Activated CD8-positive, alpha-beta memory T cell treated with anti-CD3 and anti-CD28 coated beads, Interleukin-2, amount 10 ng/mL, durations not matched to agents 7 days and 5 days (primary cell): ENCODE measurements at regions of chr9 and their contacts with region 1.

Region 1: DNA sequence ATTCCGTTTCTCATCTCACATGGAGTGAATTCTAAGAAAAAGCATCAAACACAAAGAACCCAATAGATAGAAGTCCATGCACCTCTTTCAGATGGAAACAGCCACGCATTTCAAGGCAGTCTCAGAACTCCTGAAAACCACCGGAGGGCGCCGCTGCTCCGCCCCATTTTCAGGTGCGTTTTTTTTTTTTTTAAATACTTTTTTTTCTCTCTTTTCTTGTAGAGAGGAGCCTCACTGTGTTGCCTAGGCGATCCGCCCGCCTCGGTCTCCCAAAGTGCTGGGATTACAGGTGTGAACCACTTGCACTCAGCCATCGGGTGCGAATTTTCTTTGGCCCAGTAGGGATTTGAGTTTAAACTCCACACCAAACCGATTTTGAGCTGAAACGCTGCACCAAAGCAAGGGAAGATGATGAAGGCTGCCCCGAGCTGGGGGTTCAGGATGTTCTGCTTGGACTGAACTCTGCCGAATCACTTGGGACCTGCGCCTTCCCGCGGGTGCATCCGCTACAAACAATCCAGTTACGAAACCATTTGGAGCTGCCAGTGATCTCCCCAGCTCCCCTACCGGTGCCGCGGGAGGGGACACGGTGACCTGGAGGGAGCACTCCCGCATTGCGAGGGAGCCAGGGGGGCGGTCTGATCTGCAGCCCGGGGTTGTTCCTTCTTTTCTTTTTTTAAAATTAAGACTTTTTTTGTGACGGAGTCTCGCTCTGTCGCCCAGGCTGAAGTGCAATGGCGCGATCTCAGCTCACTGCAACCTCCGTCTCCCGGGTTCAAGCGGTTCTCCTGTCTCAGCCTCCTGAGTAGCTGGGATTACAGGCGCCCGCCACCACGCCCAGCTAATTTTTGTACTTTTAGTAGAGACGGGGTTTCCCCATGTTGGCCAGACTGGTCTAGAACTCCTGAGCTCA is 1.4 kb downstream of the PTGR1 start:
- DNase-seq: peak; percentile 65
- ATAC-seq: peak; percentile 64
- H3K4me3 Mint-ChIP-seq: peak overlapping the region; percentile 77
- H3K27ac Mint-ChIP-seq: no peak overlapping the region
- H3K4me1 Mint-ChIP-seq: peaks cover 17% of the 10 kb centered on the region
- H3K27me3 Mint-ChIP-seq: peaks cover 63% of the 10 kb centered on the region

Region 2: DNA sequence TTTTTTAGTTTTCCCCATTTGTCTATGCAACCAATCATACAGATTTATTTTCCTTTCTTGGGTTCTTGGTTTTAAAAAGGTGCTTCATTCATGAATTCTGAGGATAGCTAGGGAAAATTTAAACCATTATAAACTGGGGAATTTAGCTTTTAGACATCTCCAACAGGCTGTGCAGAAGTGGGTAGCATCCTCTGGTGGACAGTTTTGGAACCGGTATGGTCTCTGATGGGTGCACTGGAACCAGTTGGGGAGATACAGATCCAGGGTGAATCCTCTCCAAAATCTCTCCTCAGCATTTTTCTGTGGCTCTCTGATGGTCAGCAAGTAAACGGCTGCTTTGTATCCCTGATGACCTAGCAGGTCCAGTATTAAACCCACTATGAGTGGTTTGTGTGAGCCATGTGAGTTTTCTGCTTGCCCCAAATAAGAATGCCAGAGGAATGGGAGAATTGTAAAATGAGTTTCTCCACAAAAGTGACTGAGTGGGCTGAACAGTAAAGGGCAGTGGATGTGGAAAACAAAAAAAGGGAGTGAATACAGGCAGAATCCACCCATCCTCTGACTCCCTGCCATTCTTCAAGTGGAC is 23.9 kb after region 1 on chr9:
- CTCF ChIA-PET with region 1: interaction called, 21 read pairs
- DNase-seq: no peak
- ATAC-seq: peak; percentile 71
- H3K4me3 Mint-ChIP-seq: no peak overlapping the region
- H3K27ac Mint-ChIP-seq: no peak overlapping the region
- H3K4me1 Mint-ChIP-seq: no peaks in the 10 kb centered on the region
- H3K27me3 Mint-ChIP-seq: peaks cover 22% of the 10 kb centered on the region

Region 3: DNA sequence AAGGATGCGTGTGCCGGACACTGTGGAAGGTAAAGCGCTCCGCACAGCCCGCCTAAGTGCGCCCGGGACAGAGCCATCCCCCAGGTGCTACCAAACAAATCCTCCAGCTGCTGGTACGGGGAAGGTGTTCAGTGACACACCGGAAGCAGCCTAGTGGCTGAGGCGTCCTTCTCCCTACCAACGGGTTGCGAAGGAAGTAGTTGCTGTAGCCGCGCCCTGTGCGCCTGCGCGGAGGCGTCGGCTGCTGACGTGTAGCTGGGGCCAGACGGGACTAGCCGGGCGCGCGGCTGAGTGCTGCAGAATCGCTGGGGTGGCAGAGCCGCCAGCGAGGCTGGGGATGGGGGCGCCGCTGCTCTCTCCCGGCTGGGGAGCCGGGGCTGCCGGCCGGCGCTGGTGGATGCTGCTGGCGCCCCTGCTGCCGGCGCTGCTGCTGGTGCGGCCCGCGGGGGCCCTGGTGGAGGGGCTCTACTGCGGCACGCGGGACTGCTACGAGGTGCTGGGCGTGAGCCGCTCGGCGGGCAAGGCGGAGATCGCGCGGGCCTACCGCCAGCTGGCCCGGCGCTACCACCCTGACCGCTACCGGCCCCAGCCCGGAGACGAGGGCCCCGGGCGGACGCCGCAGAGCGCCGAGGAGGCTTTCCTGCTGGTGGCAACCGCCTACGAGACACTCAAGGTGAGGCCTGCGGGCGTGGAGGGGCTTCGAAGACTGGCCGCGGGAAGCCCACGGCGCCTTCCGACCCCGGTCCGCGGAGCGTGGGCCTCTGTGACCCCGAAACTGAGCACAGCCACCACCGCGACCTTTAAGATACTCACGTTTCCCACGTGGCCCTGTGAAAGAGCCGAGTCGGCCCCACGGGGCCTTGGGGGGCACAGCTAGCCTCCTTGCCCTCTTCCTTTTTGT is 33.2 kb after region 1 on chr9 and contains the start of gene DNAJC25:
- CTCF ChIA-PET with region 1: interaction called, 10 read pairs
- DNase-seq: peak; percentile 98
- ATAC-seq: peak; percentile 98
- H3K4me3 Mint-ChIP-seq: peak within 1 kb of the TSS; percentile 95
- H3K27ac Mint-ChIP-seq: peak within 1 kb of the TSS; percentile 80
- H3K4me1 Mint-ChIP-seq: peaks cover 35% of the 10 kb centered on the region
- H3K27me3 Mint-ChIP-seq: no peaks in the 10 kb centered on the region
- total RNA-seq, gene DNAJC25: 3.6 to 4.2 TPM

Region 4: DNA sequence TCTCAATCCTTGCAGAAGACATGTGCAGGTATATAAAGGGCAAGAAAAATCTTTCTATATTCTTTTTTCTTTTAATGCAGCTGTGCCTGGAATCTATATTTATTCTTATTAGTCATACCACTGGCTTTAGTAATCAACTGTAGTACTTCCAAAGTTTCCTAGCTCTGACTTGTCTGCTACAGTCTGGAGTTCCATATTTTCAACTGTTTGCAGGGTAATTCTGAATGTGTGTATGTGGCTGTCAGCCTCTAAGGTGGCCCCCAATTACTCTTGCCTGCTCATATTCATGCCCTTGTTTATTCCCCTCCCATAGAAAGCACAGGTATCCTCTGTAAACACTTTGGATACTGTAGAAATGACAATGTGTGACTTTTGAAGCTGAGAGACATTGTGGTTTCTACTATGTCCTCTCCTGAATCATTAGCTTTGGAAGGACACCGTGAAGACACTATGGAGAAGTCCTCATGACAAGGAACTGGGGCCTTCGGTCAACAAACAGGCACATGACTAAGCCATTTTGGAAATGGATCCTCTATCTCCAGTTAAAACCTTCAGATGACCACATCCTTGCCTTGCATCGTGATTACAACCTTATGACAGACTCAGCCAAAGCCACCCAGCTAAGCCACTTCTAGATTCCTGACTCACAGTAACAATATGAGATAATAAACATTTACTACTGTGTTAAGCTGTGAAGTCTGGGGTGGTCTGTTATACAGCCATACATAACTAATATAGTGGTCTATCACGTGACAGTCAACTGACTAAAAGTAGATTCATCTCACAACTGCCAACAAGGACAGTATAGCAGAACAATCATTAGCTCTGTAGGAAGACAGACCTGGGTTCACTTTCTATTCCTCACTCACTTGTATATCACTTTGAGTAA is 626.6 kb after region 1 on chr9:
- CTCF ChIA-PET with region 1: no interaction called
- DNase-seq: peak; percentile 43
- ATAC-seq: peak; percentile 80
- H3K4me3 Mint-ChIP-seq: no peak overlapping the region
- H3K27ac Mint-ChIP-seq: peak overlapping the region; percentile 57
- H3K4me1 Mint-ChIP-seq: peaks cover 27% of the 10 kb centered on the region
- H3K27me3 Mint-ChIP-seq: no peaks in the 10 kb centered on the region